ENCODE measurements at regions of chr1 and their contacts with region 1.

Region 1: DNA sequence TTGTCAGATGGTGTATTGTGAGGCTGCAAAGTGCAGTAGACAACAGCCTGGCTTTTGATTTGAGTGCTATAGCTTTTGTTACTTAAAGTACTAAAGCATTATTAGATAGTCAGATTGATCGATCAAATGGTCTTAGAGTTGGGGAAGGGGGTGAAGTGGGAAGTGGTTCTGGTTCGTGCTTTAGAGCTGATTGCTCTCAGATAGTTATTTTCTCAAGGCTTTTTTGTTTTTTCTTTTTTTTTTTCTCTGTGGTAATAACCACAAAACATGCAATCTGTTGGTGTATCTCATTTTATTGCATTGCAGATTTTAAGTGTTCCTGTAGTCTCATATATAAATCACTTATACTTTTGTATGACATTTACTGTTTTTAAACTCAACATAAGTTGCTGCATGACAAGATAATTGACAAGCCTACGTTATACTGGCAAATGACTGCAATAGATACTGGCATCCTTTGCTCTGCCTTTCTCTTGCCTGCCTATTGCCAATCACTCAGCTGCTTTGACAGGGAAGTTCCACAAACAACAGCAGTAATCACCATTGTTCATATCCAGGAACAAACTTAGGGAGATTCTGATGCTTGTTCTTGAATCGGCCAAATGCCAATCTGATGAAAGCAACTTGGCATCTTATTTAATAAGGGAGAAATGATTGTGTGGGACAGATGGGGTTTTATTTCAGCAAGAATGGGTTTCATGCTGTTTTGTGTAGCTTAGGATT is 125.0 kb upstream of the B3GALT2 start:
- DNase-seq: no peak
- ATAC-seq: no peak
- H3K4me3 ChIP-seq: no peak overlapping the region
- H3K4me3 Mint-ChIP-seq: no peak overlapping the region
- H3K27ac ChIP-seq: no peak overlapping the region
- H3K27ac Mint-ChIP-seq: no peak overlapping the region
- H3K4me1 ChIP-seq: peaks cover 11% of the 10 kb centered on the region
- H3K4me1 Mint-ChIP-seq: peaks cover 17% of the 10 kb centered on the region
- H3K27me3 ChIP-seq: no peaks in the 10 kb centered on the region
- H3K27me3 Mint-ChIP-seq: no peaks in the 10 kb centered on the region
- CTCF ChIP-seq: no peak

Region 2: DNA sequence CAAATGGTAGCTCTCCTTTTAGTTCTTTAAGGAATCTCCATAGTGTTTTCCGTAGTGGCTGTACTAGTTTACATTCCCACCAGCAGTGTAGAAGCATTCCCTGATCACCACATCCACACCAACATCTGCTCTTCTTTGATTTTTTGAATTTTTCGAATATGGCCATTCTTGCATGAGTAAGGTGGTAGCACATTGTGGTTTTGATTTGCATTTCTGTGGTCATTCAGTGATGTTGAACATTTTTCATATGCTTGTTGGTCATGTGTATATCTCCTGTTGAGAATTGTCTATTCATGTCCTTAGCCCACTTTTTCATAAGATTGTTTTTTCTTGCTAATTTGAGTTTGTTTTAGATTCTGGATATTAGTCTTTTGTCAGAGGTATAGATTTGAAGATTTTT is 40.4 kb before region 1 on chr1:
- CTCF ChIA-PET with region 1: no interaction called
- POLR2A ChIA-PET with region 1: no interaction called
- intact Hi-C with region 1: no loop called
- DNase-seq: no peak
- ATAC-seq: no peak
- H3K4me3 ChIP-seq: no peak overlapping the region
- H3K4me3 Mint-ChIP-seq: no peak overlapping the region
- H3K27ac ChIP-seq: no peak overlapping the region
- H3K27ac Mint-ChIP-seq: no peak overlapping the region
- H3K4me1 ChIP-seq: no peaks in the 10 kb centered on the region
- H3K4me1 Mint-ChIP-seq: no peaks in the 10 kb centered on the region
- H3K27me3 ChIP-seq: no peaks in the 10 kb centered on the region
- H3K27me3 Mint-ChIP-seq: no peaks in the 10 kb centered on the region
- CTCF ChIP-seq: no peak

Region 3: DNA sequence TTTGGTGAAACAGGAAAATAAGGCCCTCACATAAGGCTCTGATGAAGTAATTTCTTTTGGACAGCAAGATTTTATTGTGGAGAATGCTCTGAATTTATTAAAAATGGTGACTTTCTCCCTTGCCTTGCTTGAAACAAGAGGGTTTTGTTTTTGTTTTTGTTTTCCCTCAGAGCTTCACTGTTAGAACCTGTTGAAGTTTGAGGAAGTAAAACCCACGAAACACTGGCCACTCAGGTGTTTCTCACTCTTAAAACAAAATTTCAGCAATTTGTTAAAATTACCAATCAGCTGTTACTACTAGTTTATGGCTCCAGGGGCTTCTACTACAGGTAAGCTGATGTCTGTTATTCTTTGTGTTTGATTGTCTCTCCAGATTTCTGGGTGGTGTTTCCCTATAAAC is 12.3 kb before region 1 on chr1:
- CTCF ChIA-PET with region 1: no interaction called
- POLR2A ChIA-PET with region 1: no interaction called
- intact Hi-C with region 1: loop called in 1 of 2 experiments (anchors 2 kb)
- DNase-seq: no peak
- ATAC-seq: no peak
- H3K4me3 ChIP-seq: no peak overlapping the region
- H3K4me3 Mint-ChIP-seq: no peak overlapping the region
- H3K27ac ChIP-seq: no peak overlapping the region
- H3K27ac Mint-ChIP-seq: no peak overlapping the region
- H3K4me1 ChIP-seq: no peaks in the 10 kb centered on the region
- H3K4me1 Mint-ChIP-seq: no peaks in the 10 kb centered on the region
- H3K27me3 ChIP-seq: no peaks in the 10 kb centered on the region
- H3K27me3 Mint-ChIP-seq: no peaks in the 10 kb centered on the region
- CTCF ChIP-seq: no peak